ENCODE measurements at regions of chr2 and their contacts with region 1.

Region 1: GRCh38 chr2:219537657-219538488 is 5.7 kb downstream of the CHPF start:
- DNase-seq: no peak
- ATAC-seq: no peak
- H3K4me3 ChIP-seq: no peak overlapping the region
- H3K27ac ChIP-seq: no peak overlapping the region
- H3K4me1 ChIP-seq: peaks cover 28% of the 10 kb centered on the region
- H3K27me3 ChIP-seq: no peaks in the 10 kb centered on the region
- CTCF ChIP-seq: no peak
- POLR2A ChIP-seq: no peak

Region 2: DNA sequence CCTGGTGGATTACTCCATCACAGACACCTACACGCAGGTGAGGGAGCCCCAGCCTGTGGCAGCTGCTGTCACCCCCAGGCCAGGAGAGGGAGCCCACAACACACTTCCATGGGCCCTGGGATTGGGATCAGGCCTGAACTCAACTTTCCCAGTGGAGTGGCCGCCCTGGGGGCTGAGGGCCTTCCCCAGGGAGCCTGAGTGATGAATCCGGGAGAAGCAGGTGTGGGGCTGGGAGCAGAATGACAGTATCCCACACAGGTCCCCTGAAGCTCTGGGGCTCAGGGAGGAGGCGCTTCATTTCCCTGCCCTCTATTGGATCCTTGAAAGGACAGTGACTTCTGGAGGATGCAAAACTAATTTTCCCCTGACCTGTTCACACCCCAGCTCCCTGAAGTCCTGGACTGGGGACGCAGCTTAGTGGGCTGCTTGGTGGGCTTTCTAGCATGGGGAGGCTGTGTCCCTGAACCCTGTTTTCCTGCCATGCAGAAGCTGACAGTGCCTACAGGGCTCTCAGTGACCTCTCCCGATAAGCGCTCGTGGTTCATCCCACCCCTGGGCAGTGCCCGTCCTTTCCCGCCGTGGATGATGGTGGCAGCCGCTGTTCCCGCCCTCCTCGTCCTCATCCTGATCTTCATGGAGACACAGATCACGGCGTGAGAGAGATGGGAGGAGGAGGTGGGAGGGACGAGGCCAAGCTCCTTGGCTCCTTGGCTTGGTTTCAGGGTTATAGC is 100.5 kb after region 1 on chr2:
- intact Hi-C with region 1: loop called (anchors 5 kb)
- DNase-seq: no peak
- ATAC-seq: no peak
- H3K4me3 ChIP-seq: no peak overlapping the region
- H3K27ac ChIP-seq: no peak overlapping the region
- H3K4me1 ChIP-seq: peaks cover 5% of the 10 kb centered on the region
- H3K27me3 ChIP-seq: no peaks in the 10 kb centered on the region
- CTCF ChIP-seq: no peak
- POLR2A ChIP-seq: no peak

Measured in body of pancreas (tissue), 4 donors.